ENCODE measurements at regions of chr7 and their contacts with region 1.

Region 1: GRCh38 chr7:100532165-100533022 is 6.6 kb upstream of the AGFG2 start:
- DNase-seq: no peak
- H3K4me3 Mint-ChIP-seq: no peak overlapping the region
- H3K27ac Mint-ChIP-seq: no peak overlapping the region
- H3K4me1 Mint-ChIP-seq: peaks cover 8% of the 10 kb centered on the region
- H3K27me3 Mint-ChIP-seq: no peaks in the 10 kb centered on the region

Region 2: GRCh38 chr7:100493476-100494264 is 38.7 kb before region 1 on chr7:
- CTCF ChIA-PET with region 1: no interaction called
- intact Hi-C with region 1: loop called (anchors 2 kb)
- DNase-seq: peak; percentile 77
- H3K4me3 Mint-ChIP-seq: peak overlapping the region; percentile 60
- H3K27ac Mint-ChIP-seq: no peak overlapping the region
- H3K4me1 Mint-ChIP-seq: peaks cover 11% of the 10 kb centered on the region
- H3K27me3 Mint-ChIP-seq: peaks cover 2% of the 10 kb centered on the region

Region 3: DNA sequence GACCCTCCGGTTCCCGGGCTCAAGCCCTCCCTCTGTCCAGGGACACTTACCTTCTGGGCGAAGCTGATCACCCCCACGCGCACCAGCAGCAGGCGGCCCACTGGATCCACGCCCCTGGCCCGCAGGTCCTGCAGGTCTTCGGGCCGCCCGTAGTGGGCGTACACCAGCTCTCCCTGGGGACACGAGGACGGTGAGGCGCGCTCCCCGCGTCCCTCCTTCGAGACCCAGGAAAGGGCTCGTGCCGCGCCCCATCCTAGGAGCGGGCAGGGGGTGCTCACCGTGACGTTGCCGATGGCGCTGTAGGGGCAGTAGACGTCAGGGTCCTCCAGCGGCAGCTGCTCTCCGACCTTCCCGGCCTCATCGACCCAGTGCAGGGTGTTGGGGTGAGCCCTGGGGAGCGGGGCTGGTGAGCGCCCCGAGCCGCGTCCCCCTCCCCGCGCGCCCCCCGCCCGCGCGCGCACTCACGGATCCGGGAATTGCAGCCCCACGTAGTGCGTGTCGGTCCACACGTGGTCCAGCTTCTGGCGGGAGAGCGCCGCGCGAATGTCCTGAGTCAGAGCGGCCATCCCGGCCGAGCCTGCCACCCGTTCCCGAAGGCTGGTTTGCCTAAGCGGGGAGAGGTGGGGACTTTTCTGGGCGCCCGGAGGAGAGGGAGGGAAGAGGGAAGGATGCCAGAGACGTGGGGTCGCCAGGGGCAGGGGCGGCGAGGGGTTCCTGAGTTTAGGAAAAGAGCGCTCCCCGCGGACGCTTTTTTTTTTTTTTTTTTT is 100.7 kb after region 1 on chr7:
- CTCF ChIA-PET with region 1: no interaction called
- intact Hi-C with region 1: no loop called
- DNase-seq: peak; percentile 71
- H3K4me3 Mint-ChIP-seq: peak overlapping the region; percentile 80
- H3K27ac Mint-ChIP-seq: peak overlapping the region; percentile 76
- H3K4me1 Mint-ChIP-seq: peaks cover 22% of the 10 kb centered on the region
- H3K27me3 Mint-ChIP-seq: no peaks in the 10 kb centered on the region